Activated CD4-positive, alpha-beta T cell treated with anti-CD3 and anti-CD28 coated beads for 36 hours (primary cell): ENCODE measurements at regions of chr7 and their contacts with region 1.

Region 1: GRCh38 chr7:56009695-56010094 is 41.5 kb downstream of the PSPH start:
- DNase-seq: no peak
- ATAC-seq: no peak
- H3K4me3 Mint-ChIP-seq: no peak overlapping the region
- H3K27ac Mint-ChIP-seq: no peak overlapping the region
- H3K4me1 Mint-ChIP-seq: no peaks in the 10 kb centered on the region
- H3K27me3 Mint-ChIP-seq: no peaks in the 10 kb centered on the region

Region 2: GRCh38 chr7:55964261-55965099 is 45.2 kb before region 1 on chr7 and contains the start of gene NIPSNAP2:
- CTCF ChIA-PET with region 1: no interaction called
- POLR2A ChIA-PET with region 1: no interaction called
- intact Hi-C with region 1: no loop called
- DNase-seq: peak; percentile 81
- ATAC-seq: peak; percentile 92
- H3K4me3 Mint-ChIP-seq: peak within 1 kb of the TSS; percentile 86
- H3K27ac Mint-ChIP-seq: peak within 1 kb of the TSS; percentile 90
- H3K4me1 Mint-ChIP-seq: peaks cover 33% of the 10 kb centered on the region
- H3K27me3 Mint-ChIP-seq: no peaks in the 10 kb centered on the region
- total RNA-seq, gene NIPSNAP2: 60.5 to 69.8 TPM

Region 3: DNA sequence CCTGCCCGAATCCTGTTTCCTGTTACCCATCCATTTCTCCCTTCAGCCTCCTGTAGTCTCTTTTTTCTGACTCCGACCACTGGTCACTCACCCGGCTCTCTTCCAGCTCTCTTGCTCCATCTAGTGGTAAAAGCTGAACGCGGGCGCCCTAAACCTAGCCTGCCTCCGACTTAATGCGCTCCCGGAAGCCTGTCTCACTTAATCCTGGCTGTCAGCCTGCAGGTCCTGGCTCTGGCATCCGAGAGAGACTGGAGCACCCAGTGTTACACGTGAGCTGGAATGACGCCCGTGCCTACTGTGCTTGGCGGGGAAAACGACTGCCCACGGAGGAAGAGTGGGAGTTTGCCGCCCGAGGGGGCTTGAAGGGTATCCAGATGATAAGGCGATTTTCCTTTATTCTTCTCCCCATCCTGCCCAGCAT is 64.7 kb after region 1 on chr7:
- CTCF ChIA-PET with region 1: interaction called, 41 read pairs
- POLR2A ChIA-PET with region 1: interaction called, 12 read pairs
- intact Hi-C with region 1: loop called (anchors 1 kb)
- DNase-seq: peak; percentile 78
- ATAC-seq: peak; percentile 88
- H3K4me3 Mint-ChIP-seq: no peak overlapping the region
- H3K27ac Mint-ChIP-seq: peak overlapping the region; percentile 11
- H3K4me1 Mint-ChIP-seq: peaks cover 6% of the 10 kb centered on the region
- H3K27me3 Mint-ChIP-seq: no peaks in the 10 kb centered on the region